ENCODE measurements at regions of chr1 and their contacts with region 1.

Region 1: GRCh38 chr1:9615316-9616063 is 26.8 kb downstream of the TMEM201 start:
- DNase-seq: peak; percentile 56
- ATAC-seq: peak; percentile 92
- H3K4me3 ChIP-seq: no peak overlapping the region
- H3K27ac ChIP-seq: no peak overlapping the region
- H3K4me1 ChIP-seq: no peaks in the 10 kb centered on the region
- H3K27me3 ChIP-seq: no peaks in the 10 kb centered on the region
- CTCF ChIP-seq: peak; percentile 83

Region 2: DNA sequence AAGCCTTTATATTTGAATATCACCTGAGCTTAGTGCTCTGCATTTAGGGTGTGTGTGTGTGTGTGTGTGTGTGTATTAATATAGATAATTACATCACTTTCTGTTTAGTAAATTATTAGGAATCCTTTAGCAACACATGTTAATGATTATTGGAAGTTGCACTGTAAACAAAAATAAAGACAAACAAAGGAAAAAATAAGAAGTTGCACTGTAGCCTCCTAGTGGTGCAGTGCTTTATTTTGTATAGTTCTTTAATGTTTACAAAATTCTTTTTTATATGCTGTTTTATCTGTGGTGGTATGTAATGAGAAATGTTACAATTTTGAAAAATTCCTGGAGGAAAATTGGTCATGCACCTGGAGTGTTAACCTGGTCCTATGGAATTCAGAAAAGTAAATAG is 486.4 kb after region 1 on chr1:
- CTCF ChIA-PET with region 1: no interaction called
- POLR2A ChIA-PET with region 1: interaction called, 12 read pairs
- intact Hi-C with region 1: no loop called
- DNase-seq: no peak
- ATAC-seq: no peak
- H3K4me3 ChIP-seq: no peak overlapping the region
- H3K27ac ChIP-seq: no peak overlapping the region
- H3K4me1 ChIP-seq: 0 out of 2 replicates have a peak, but pooled peaks cover under 1% of the 10 kb centered on the region
- H3K27me3 ChIP-seq: no peaks in the 10 kb centered on the region
- CTCF ChIP-seq: peak; percentile 50

Measured in PC-3 (cell line).